ENCODE measurements at regions of chr3 and their contacts with region 1.

Region 1: DNA sequence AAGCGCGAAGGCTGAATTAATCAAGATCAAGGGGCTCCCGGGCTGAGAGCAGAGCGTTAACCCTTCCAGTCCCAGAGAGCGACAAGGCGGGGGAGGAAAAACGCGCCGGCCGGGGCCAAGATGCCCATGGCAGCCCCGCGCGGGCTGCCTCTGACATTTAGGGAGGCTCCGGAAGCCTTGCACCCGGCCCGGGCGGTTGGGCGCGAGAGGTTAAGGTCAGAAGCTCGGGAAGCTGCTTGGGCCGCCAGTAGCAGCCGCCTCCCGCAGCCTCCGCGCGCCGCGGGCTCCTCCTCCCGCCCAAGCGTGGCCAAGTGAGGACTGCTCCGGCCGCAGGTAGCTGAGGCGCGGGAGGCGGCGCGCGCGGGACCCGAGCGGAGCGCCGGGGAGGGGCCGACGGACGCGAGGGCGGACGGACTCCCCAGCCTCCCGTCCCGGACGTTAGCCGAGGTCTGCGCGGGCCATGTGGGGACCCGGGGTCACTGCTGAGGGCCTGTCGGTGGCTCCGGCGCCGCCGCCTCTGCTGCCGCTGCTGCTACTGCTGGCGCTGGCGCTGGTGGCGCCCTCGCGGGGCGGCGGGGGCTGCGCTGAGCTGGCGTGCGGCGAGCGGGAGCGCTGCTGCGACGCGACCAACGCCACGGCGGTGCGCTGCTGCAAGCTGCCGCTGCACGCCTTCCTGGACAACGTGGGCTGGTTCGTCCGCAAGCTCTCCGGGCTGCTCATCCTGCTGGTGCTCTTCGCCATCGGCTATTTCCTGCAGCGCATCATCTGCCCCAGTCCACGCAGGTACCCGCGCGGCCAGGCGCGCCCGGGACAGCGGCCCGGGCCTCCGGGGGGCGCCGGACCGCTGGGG is at the start of gene C3orf80:
- DNase-seq: peak; percentile 40 to 69
- H3K4me3 ChIP-seq: peak within 1 kb of the TSS; percentile 77
- H3K27ac ChIP-seq: no peak within 1 kb of the TSS
- H3K4me1 ChIP-seq: no peaks in the 10 kb centered on the region
- H3K27me3 ChIP-seq: peaks cover 8% of the 10 kb centered on the region; the same call in 1 of the 2 replicates
- CTCF ChIP-seq: peak; percentile 23; the same call in 1 of the 2 replicates
- total RNA-seq, gene C3orf80: not detected in 2 replicates

Region 2: GRCh38 chr3:160038862-160039562 is 186.4 kb before region 1 on chr3:
- CTCF ChIA-PET with region 1: no interaction called
- POLR2A ChIA-PET with region 1: no interaction called
- intact Hi-C with region 1: loop called (anchors 10 kb)
- DNase-seq: peak in 1 of 2 experiments; percentile 43
- H3K4me3 ChIP-seq: peak overlapping the region; percentile 16; the same call in 1 of the 2 replicates
- H3K27ac ChIP-seq: no peak overlapping the region
- H3K4me1 ChIP-seq: no peaks in the 10 kb centered on the region
- H3K27me3 ChIP-seq: no peaks in the 10 kb centered on the region
- CTCF ChIP-seq: no peak

Region 3: DNA sequence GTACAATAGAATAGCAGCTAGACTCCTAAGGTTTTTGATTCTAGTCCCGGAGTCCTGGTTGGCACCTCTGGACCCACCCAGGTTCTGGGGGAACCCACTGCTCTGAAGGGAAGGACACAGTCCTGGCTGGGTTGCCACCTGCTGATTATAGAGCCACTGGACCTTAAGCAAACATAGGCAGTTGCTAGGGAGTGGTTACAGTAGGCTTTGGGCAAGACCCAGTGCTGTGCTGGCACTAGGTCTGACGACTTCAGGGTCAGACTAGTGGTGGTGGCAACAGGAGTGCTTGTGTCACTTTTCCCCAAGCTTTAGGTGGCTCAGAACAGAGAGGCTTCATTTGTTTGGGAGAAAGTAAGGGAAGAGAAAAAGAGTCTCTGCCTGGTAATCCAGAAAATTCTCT is 110.0 kb before region 1 on chr3:
- CTCF ChIA-PET with region 1: no interaction called
- POLR2A ChIA-PET with region 1: no interaction called
- intact Hi-C with region 1: no loop called
- DNase-seq: no peak
- H3K4me3 ChIP-seq: no peak overlapping the region
- H3K27ac ChIP-seq: no peak overlapping the region
- H3K4me1 ChIP-seq: no peaks in the 10 kb centered on the region
- H3K27me3 ChIP-seq: no peaks in the 10 kb centered on the region
- CTCF ChIP-seq: no peak

Region 4: GRCh38 chr3:161177996-161178395 is 952.6 kb after region 1 on chr3:
- CTCF ChIA-PET with region 1: no interaction called
- POLR2A ChIA-PET with region 1: no interaction called
- intact Hi-C with region 1: no loop called
- DNase-seq: no peak
- H3K4me3 ChIP-seq: no peak overlapping the region
- H3K27ac ChIP-seq: no peak overlapping the region
- H3K4me1 ChIP-seq: no peaks in the 10 kb centered on the region; the same call in 1 of the 2 replicates
- H3K27me3 ChIP-seq: no peaks in the 10 kb centered on the region
- CTCF ChIP-seq: no peak

Region 5: DNA sequence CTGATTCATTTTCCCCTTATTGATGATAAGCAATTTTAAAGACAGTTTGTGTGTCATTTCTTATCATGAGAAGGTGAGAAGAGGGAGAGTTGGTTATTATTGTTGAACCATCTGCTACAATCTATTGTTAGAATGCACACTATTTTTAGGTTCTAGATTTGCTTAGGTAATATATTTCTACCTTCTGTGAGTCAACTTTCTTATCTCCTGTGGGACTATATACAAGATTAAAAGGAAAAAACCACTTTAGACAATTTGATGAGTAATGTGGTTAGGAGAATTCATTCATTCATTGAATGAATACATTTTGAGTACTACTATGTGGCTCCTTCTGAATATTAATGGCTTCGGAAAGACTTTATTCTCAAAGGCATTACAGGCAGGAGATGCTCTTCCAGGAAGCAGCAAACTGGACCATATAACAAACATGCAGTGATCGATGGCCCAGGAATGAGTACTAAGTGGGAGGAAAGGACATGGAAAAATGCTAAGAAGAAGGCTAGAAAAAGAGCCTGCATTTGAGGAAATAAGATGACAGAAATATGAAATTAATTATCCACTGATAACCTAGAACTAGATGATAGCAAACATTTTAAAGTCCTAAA is 1123.5 kb after region 1 on chr3:
- CTCF ChIA-PET with region 1: no interaction called
- POLR2A ChIA-PET with region 1: no interaction called
- intact Hi-C with region 1: no loop called
- DNase-seq: no peak
- H3K4me3 ChIP-seq: no peak overlapping the region
- H3K27ac ChIP-seq: no peak overlapping the region
- H3K4me1 ChIP-seq: peaks cover 36% of the 10 kb centered on the region
- H3K27me3 ChIP-seq: no peaks in the 10 kb centered on the region
- CTCF ChIP-seq: no peak

Measured in PC-9 (cell line).